IMR-90 (cell line): ENCODE measurements at regions of chr6 and their contacts with region 1.

Region 1: DNA sequence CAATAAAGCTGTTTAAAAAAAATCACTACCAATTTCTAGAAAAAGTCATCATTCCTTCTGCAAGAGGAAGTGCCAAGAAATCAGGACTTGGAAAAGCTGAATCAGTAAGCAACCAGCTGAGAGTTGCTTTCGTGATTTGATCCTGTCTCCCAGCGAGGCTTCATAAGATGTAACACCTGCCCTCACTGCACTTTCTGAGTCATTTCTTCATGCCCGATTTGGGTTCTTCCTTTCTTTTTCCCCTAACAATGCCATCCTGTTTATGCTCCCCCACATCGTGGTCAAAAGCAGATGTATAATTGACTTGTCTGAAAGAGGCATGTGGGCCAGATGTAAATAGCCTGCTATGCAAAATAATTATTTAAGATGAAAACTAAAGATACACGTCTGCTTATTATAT is 52.1 kb downstream of the RIPOR2 start:
- DNase-seq: peak; percentile 93
- ATAC-seq: peak; percentile 60
- H3K4me3 ChIP-seq: no peak overlapping the region; the same call in 1 of the 2 replicates
- H3K27ac ChIP-seq: no peak overlapping the region; the same call in 1 of the 2 replicates
- H3K4me1 ChIP-seq: peaks cover 16% of the 10 kb centered on the region
- H3K27me3 ChIP-seq: no peaks in the 10 kb centered on the region
- CTCF ChIP-seq: no peak
- POLR2A ChIP-seq: no peak
- RAD21 ChIP-seq: no peak

Region 2: DNA sequence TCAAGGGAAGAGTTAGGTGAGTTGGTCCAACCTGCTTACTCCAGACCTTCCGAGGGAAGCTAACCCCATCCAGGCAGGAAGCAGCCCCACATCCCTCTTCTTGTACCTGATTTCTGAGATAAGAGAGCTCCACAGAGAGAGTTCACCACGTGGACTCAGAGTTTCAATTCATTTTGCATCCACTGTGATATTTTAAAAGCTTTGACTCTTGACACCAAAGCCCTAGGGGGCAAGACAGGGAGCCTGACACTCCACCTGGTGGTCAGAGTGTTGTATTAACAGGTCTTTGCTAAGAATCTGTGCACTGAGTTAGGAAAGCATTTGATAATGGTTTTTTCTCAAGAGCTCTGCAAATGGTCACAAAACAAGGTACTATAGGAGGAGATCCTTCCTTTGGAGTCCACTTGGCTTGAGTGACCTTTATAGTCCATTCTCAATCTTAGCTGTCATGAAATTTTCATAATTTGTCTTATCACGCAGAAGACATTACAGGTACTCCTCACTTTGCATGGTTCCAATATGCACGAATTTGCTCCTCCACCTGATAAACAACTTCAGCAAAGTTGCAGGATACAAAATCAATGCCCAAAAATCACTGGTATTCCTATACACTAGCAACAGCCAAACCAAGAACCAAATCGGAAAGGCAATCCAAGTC is 108.3 kb after region 1 on chr6:
- CTCF ChIA-PET with region 1: interaction called, 12 read pairs
- POLR2A ChIA-PET with region 1: no interaction called
- dilution Hi-C with region 1: no loop called
- in situ Hi-C with region 1: no loop called
- intact Hi-C with region 1: no loop called
- DNase-seq: peak; percentile 48
- ATAC-seq: peak; percentile 74
- H3K4me3 ChIP-seq: no peak overlapping the region
- H3K27ac ChIP-seq: no peak overlapping the region
- H3K4me1 ChIP-seq: peaks cover 3% of the 10 kb centered on the region
- H3K27me3 ChIP-seq: no peaks in the 10 kb centered on the region
- CTCF ChIP-seq: peak; percentile 65
- POLR2A ChIP-seq: no peak
- RAD21 ChIP-seq: peak; percentile 69

Region 3: DNA sequence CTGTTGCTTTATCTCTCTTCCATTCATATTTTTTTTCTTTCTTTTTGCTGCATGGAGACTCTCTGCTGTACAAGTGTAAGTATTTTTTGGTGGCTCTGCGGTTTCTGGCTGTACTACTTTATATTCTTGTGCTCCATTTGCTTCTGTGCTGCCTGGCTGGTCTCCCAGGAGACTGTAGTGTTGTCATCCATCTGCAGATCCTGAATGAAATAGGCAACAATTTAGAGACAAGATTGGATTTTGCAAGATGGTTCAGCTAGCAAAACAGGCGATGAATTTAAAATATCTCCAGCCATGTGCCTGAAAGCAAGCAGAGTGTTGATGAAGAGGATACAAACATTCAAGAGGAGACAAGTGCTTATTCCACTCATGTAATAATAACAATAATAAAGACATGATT is 693.3 kb after region 1 on chr6:
- CTCF ChIA-PET with region 1: no interaction called
- POLR2A ChIA-PET with region 1: no interaction called
- dilution Hi-C with region 1: no loop called
- in situ Hi-C with region 1: no loop called
- intact Hi-C with region 1: no loop called
- DNase-seq: no peak
- ATAC-seq: no peak
- H3K4me3 ChIP-seq: no peak overlapping the region
- H3K27ac ChIP-seq: no peak overlapping the region
- H3K4me1 ChIP-seq: no peaks in the 10 kb centered on the region
- H3K27me3 ChIP-seq: no peaks in the 10 kb centered on the region
- CTCF ChIP-seq: no peak
- POLR2A ChIP-seq: no peak
- RAD21 ChIP-seq: no peak